Activated B cell treated with CpG ODN at 0.5 μM for 24 hours (primary cell): ENCODE measurements at regions of chr12 and their contacts with region 1.

Region 1: GRCh38 chr12:112108201-112109079 is at the start of gene NAA25:
- DNase-seq: peak; percentile 85
- ATAC-seq: peak; percentile 68
- H3K4me3 Mint-ChIP-seq: peak within 1 kb of the TSS; percentile 96
- H3K27ac Mint-ChIP-seq: peak within 1 kb of the TSS; percentile 98
- H3K4me1 Mint-ChIP-seq: peaks cover 41% of the 10 kb centered on the region
- H3K27me3 Mint-ChIP-seq: no peaks in the 10 kb centered on the region
- CTCF ChIP-seq: no peak
- total RNA-seq, gene NAA25: 43.5 and 52.7 TPM in 2 replicates

Region 2: GRCh38 chr12:112012775-112013600 is 95.5 kb before region 1 on chr12 and contains the starts of genes ERP29 and TMEM116:
- CTCF ChIA-PET with region 1: no interaction called
- POLR2A ChIA-PET with region 1: interaction called, 47 read pairs
- intact Hi-C with region 1: loop called (anchors 1 kb)
- DNase-seq: peak; percentile 99
- ATAC-seq: peak; percentile 72
- H3K4me3 Mint-ChIP-seq: peak within 1 kb of the TSS; percentile 96
- H3K27ac Mint-ChIP-seq: peak within 1 kb of the TSS; percentile 99
- H3K4me1 Mint-ChIP-seq: peaks cover 63% of the 10 kb centered on the region
- H3K27me3 Mint-ChIP-seq: no peaks in the 10 kb centered on the region
- CTCF ChIP-seq: no peak
- total RNA-seq, gene ERP29: 133 and 135 TPM in 2 replicates
- total RNA-seq, gene TMEM116: 6.4 and 10.5 TPM in 2 replicates

Region 3: DNA sequence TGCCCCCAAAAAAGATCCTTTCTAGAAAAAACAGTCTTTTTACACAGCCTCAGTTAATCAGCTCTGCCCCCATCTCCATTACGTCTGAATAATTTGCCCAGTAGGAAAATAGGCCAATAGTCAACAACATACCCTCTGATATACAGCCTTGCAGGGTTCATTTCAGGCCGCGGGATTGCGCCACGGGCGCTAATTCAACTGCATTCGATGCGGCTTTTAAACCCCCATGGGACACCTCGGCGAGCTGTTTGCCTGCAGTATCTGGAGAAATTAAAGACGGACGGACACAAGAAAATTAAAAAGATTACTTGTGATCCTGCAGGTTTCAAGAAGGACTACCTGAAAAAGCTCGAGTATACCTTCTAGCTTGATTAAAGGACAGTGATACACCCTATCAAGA is 59.1 kb before region 1 on chr12:
- CTCF ChIA-PET with region 1: no interaction called
- POLR2A ChIA-PET with region 1: no interaction called
- intact Hi-C with region 1: no loop called
- DNase-seq: no peak
- ATAC-seq: no peak
- H3K4me3 Mint-ChIP-seq: no peak overlapping the region
- H3K27ac Mint-ChIP-seq: no peak overlapping the region
- H3K4me1 Mint-ChIP-seq: peaks cover 12% of the 10 kb centered on the region
- H3K27me3 Mint-ChIP-seq: no peaks in the 10 kb centered on the region
- CTCF ChIP-seq: no peak

Region 4: GRCh38 chr12:112096667-112097066 is 11.8 kb before region 1 on chr12:
- CTCF ChIA-PET with region 1: no interaction called
- POLR2A ChIA-PET with region 1: interaction called, 15 read pairs
- intact Hi-C with region 1: loop called (anchors 1 kb)
- DNase-seq: no peak
- ATAC-seq: peak; percentile 37
- H3K4me3 Mint-ChIP-seq: no peak overlapping the region
- H3K27ac Mint-ChIP-seq: peak overlapping the region; percentile 75
- H3K4me1 Mint-ChIP-seq: peaks cover 24% of the 10 kb centered on the region
- H3K27me3 Mint-ChIP-seq: no peaks in the 10 kb centered on the region
- CTCF ChIP-seq: no peak

Region 5: GRCh38 chr12:112130441-112130998 is 22.1 kb after region 1 on chr12:
- CTCF ChIA-PET with region 1: interaction called, 7 read pairs
- POLR2A ChIA-PET with region 1: interaction called, 143 read pairs
- intact Hi-C with region 1: loop called (anchors 1 kb)
- DNase-seq: no peak
- ATAC-seq: peak; percentile 67
- H3K4me3 Mint-ChIP-seq: peak overlapping the region; percentile 66
- H3K27ac Mint-ChIP-seq: peak overlapping the region; percentile 79
- H3K4me1 Mint-ChIP-seq: peaks cover 63% of the 10 kb centered on the region
- H3K27me3 Mint-ChIP-seq: no peaks in the 10 kb centered on the region
- CTCF ChIP-seq: no peak

Region 6: DNA sequence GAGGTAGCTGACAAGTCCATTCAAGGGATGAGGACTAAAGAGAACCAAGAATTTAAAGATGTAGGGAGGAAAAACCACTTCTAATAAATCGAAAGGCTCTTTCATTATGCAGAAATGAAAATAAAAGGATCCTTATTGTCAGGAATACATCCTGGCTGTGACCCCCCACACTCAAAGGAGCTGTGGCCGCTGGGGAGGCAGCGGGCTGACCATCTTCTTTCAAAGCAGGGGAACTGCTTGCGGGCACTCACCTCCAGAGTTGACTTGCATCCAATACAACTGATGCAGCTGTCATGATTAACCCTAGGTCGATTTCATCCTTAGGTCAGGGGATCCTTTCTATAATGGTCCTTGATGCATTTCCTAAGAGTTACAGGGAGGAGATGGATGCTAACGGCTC is 52.2 kb after region 1 on chr12:
- CTCF ChIA-PET with region 1: no interaction called
- POLR2A ChIA-PET with region 1: interaction called, 12 read pairs
- intact Hi-C with region 1: no loop called
- DNase-seq: no peak
- ATAC-seq: no peak
- H3K4me3 Mint-ChIP-seq: no peak overlapping the region
- H3K27ac Mint-ChIP-seq: peak overlapping the region; percentile 59
- H3K4me1 Mint-ChIP-seq: peaks cover 31% of the 10 kb centered on the region
- H3K27me3 Mint-ChIP-seq: no peaks in the 10 kb centered on the region
- CTCF ChIP-seq: no peak

Region 7: DNA sequence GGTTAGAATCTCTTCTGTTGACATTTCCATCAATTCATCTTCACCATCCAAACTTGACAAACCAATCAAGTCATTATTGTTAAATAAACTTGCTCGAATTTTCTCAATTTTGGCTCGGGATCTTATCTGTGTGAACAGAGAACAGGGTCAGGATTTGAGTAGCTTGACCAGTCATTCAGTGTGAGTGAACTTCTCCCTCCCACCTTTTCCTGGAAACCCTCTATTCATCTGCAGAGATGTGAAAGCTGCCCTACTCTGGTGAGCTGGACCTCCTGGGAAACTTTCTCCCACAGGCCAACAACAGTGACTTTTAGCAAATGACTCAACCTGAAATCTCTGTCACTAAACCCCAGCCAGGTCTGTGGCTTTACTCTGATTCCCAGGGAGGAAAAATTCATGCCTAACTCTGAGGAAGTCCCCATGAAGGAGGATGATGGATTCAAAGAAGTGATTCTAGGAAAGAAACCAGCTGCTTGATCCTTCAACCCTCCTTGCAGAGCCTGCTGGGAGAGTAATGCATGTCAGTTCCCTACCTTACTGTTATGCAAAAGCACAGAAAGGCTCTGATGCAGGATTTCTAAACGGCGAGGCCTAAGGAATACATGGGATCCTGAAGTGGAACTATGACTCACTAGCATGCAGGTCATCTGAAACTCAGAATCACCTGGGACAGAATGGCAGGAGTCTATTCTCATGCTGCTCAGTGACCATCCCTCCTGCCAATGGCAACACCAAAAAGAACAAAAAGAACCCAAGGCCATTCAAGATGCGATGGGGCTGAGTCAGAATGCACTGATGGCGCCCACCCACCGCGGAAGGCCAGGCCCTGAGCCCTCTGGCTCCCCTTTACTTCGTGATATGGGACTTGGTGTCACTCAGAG is 74.9 kb after region 1 on chr12:
- CTCF ChIA-PET with region 1: no interaction called
- POLR2A ChIA-PET with region 1: no interaction called
- intact Hi-C with region 1: no loop called
- DNase-seq: no peak
- ATAC-seq: no peak
- H3K4me3 Mint-ChIP-seq: no peak overlapping the region
- H3K27ac Mint-ChIP-seq: no peak overlapping the region
- H3K4me1 Mint-ChIP-seq: no peaks in the 10 kb centered on the region
- H3K27me3 Mint-ChIP-seq: no peaks in the 10 kb centered on the region
- CTCF ChIP-seq: no peak